Activated CD4-positive, alpha-beta T cell treated with anti-CD3 and anti-CD28 coated beads for 36 hours (primary cell): ENCODE measurements at regions of chr9 and their contacts with region 1.

Region 1: GRCh38 chr9:128723866-128724743 is at the start of gene ZDHHC12:
- DNase-seq: peak; percentile 100
- ATAC-seq: peak; percentile 98
- H3K4me3 Mint-ChIP-seq: peak within 1 kb of the TSS; percentile 95
- H3K27ac Mint-ChIP-seq: peak within 1 kb of the TSS; percentile 94
- H3K4me1 Mint-ChIP-seq: peaks cover 25% of the 10 kb centered on the region
- H3K27me3 Mint-ChIP-seq: no peaks in the 10 kb centered on the region
- total RNA-seq, gene ZDHHC12: 45.3 to 49.5 TPM

Region 2: GRCh38 chr9:128136816-128137793 is 587.0 kb before region 1 on chr9:
- CTCF ChIA-PET with region 1: no interaction called
- POLR2A ChIA-PET with region 1: no interaction called
- intact Hi-C with region 1: no loop called
- DNase-seq: no peak
- ATAC-seq: no peak
- H3K4me3 Mint-ChIP-seq: no peak overlapping the region
- H3K27ac Mint-ChIP-seq: no peak overlapping the region
- H3K4me1 Mint-ChIP-seq: peaks cover 5% of the 10 kb centered on the region
- H3K27me3 Mint-ChIP-seq: no peaks in the 10 kb centered on the region

Region 3: GRCh38 chr9:128339771-128340690 is 384.1 kb before region 1 on chr9 and contains the start of gene SLC27A4:
- CTCF ChIA-PET with region 1: no interaction called
- POLR2A ChIA-PET with region 1: no interaction called
- intact Hi-C with region 1: loop called in 1 of 2 experiments (anchors 1 kb)
- DNase-seq: peak; percentile 88
- ATAC-seq: peak; percentile 93
- H3K4me3 Mint-ChIP-seq: peak within 1 kb of the TSS; percentile 88
- H3K27ac Mint-ChIP-seq: peak within 1 kb of the TSS; percentile 83
- H3K4me1 Mint-ChIP-seq: peaks cover 6% of the 10 kb centered on the region
- H3K27me3 Mint-ChIP-seq: no peaks in the 10 kb centered on the region
- total RNA-seq, gene SLC27A4: 8.4 to 10.2 TPM

Region 4: GRCh38 chr9:128552153-128552743 is 171.9 kb before region 1 on chr9 and contains the start of gene SPTAN1:
- CTCF ChIA-PET with region 1: no interaction called
- POLR2A ChIA-PET with region 1: interaction called, 4 read pairs
- intact Hi-C with region 1: loop called (anchors 1 kb)
- DNase-seq: peak; percentile 98
- ATAC-seq: peak; percentile 78
- H3K4me3 Mint-ChIP-seq: no peak within 1 kb of the TSS
- H3K27ac Mint-ChIP-seq: peak within 1 kb of the TSS; percentile 97
- H3K4me1 Mint-ChIP-seq: peaks cover 34% of the 10 kb centered on the region
- H3K27me3 Mint-ChIP-seq: no peaks in the 10 kb centered on the region
- total RNA-seq, gene SPTAN1: 192 to 269 TPM

Region 5: GRCh38 chr9:128702445-128702948 is 21.6 kb before region 1 on chr9 and contains the start of gene PKN3:
- CTCF ChIA-PET with region 1: interaction called, 3 read pairs
- POLR2A ChIA-PET with region 1: interaction called, 3 read pairs
- intact Hi-C with region 1: loop called in 1 of 2 experiments (anchors 1 kb)
- DNase-seq: peak; percentile 95
- ATAC-seq: peak; percentile 85
- H3K4me3 Mint-ChIP-seq: peak within 1 kb of the TSS; percentile 73
- H3K27ac Mint-ChIP-seq: peak within 1 kb of the TSS; percentile 74
- H3K4me1 Mint-ChIP-seq: peaks cover 10% of the 10 kb centered on the region
- H3K27me3 Mint-ChIP-seq: no peaks in the 10 kb centered on the region
- total RNA-seq, gene PKN3: 14.6 to 14.9 TPM

Region 6: GRCh38 chr9:128829477-128830251 is 105.6 kb after region 1 on chr9 and contains the start of gene SPOUT1:
- CTCF ChIA-PET with region 1: no interaction called
- POLR2A ChIA-PET with region 1: interaction called, 3 read pairs
- intact Hi-C with region 1: loop called in 1 of 2 experiments (anchors 1 kb)
- DNase-seq: peak; percentile 96
- ATAC-seq: peak; percentile 98
- H3K4me3 Mint-ChIP-seq: peak within 1 kb of the TSS; percentile 91
- H3K27ac Mint-ChIP-seq: peak within 1 kb of the TSS; percentile 88
- H3K4me1 Mint-ChIP-seq: peaks cover 23% of the 10 kb centered on the region
- H3K27me3 Mint-ChIP-seq: no peaks in the 10 kb centered on the region
- total RNA-seq, gene SPOUT1: 87.9 to 92.9 TPM

Region 7: DNA sequence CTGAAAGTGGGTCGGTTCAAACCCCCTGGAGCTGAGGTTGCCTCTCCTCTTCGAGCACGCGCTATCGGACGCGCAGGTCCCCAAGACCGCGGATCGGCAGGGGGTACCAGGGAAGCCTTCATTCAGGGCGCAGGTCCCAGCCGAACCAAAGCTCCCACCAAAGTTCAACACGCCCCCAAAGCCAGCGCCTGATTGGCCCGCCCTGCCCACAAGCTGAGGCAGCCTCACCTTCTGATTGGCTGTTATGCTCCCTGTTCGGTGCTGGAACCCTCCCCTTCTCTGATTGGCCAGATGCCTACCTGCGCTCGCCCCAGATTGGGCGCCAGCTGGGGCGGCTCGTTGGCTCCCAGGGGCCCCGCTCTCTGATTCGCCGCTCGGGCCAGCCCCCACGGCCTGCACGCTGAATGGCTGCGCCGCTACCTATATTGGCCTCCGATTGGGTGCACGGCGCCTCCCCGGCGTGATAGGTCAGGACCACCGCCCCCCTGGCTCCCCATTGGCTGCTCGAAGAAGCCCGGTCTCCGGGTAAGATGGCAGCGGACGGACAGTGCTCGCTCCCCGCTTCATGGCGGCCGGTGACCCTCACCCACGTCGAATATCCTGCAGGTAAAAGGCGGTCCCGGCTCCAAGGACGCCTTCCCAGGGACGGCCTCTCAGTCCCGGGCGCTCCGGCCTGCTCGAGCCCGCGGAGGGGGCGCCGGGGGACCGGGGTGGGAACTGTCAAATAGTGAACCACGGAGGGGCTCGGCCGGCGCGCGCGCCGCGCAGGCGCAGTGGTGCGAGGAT is 356.7 kb after region 1 on chr9 and contains the start of gene DOLPP1:
- CTCF ChIA-PET with region 1: no interaction called
- POLR2A ChIA-PET with region 1: no interaction called
- intact Hi-C with region 1: loop called in 1 of 2 experiments (anchors 1 kb)
- DNase-seq: peak; percentile 99
- ATAC-seq: peak; percentile 98
- H3K4me3 Mint-ChIP-seq: peak within 1 kb of the TSS; percentile 83
- H3K27ac Mint-ChIP-seq: peak within 1 kb of the TSS; percentile 63
- H3K4me1 Mint-ChIP-seq: peaks cover 20% of the 10 kb centered on the region
- H3K27me3 Mint-ChIP-seq: no peaks in the 10 kb centered on the region
- total RNA-seq, gene DOLPP1: 15.1 to 16.4 TPM